ENCODE measurements at regions of chr15 and their contacts with region 1.

Region 1: DNA sequence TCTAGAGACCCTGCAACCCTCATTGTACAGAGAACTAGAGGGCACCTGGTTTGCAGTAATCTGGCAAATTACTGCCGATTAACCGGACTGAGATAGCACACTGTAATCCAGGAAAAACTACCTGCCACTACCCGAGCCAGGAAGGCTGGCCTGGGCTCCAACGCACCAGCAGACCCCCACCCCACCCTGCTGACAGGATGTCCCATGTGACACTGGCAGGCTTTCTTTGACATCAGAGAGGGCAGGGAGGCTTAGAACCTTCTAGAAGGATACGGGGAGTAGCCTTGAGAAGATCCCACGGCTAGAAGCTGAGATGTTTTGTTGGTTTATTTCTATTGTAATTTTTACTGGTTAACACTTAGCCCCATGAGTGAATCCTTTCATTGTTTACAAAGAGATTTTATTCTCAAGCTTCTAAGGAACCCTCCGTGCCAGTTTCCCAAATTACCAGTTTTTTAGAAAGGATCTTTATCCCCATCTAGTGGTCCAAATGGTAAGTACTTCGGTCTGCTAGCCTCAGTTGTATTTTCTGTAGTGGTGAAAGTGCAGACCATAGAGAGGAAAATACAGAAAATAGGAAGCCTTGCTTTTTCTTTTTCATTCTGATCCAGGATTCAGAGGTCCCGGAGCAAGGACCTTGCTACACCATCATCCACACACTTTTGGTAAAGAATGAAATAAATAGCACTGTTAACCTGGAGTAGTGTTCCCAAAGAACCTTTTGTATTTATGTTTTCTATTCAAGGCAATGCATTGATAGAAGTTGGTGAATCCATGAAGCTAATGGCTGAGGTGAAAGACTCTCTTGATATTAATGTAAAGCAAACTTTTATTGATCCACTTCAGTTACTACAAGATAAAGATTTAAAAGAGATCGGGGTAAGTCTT is 81.9 kb upstream of the ADAMTSL3 start:
- DNase-seq: no peak
- ATAC-seq: 0 out of 3 replicates have a peak, but pooled peaks have one; percentile 29
- H3K4me3 ChIP-seq: no peak overlapping the region
- H3K27ac ChIP-seq: no peak overlapping the region
- H3K4me1 ChIP-seq: no peaks in the 10 kb centered on the region; the same call in 1 of the 2 replicates
- H3K27me3 ChIP-seq: no peaks in the 10 kb centered on the region; a peak in 1 of 4 replicates
- CTCF ChIP-seq: peak; percentile 40 to 62 (median 50); a peak in 4 of 6 replicates
- EP300 ChIP-seq: no peak
- POLR2A ChIP-seq: no peak
- RAD21 ChIP-seq: peak; percentile 48

Region 2: DNA sequence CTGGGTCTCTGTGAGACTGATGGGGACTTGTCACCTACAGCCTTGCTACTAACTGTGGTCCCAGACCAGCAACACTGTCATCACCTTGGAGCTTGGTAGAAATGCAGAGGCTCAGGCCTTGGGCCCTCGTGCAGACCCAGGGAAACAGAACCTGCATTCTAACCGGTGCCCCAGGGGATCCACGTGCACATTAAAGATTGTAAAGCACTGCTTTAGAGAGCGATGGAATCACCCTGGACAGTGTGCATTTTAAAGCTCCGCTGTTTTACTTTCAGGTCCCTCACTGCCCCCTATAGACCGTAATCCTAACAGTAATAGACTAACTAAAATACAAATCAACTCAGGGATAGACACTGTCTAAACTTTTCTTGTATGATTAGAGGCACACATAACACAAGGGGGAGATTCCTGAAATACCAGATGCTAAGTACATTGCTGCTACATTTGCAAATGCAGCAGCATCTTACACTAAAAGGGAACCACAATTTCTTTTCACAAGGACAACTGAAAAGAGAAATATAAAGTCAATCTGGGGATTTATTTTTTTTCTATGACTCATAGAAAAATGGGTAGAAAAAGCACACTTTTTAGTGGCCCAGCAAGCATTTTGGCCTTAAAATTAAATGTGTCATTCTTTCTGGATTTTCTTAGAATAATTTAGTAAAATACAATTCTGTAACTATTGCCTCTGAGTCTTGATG is 135.5 kb before region 1 on chr15:
- CTCF ChIA-PET with region 1: interaction called, 8 read pairs
- POLR2A ChIA-PET with region 1: no interaction called
- RAD21 ChIA-PET with region 1: interaction called, 4 read pairs
- SMC1A ChIA-PET with region 1: no interaction called
- in situ Hi-C with region 1: no loop called
- intact Hi-C with region 1: loop called (anchors 1 kb)
- DNase-seq: no peak
- ATAC-seq: peak; percentile 70
- H3K4me3 ChIP-seq: no peak overlapping the region
- H3K27ac ChIP-seq: no peak overlapping the region
- H3K4me1 ChIP-seq: no peaks in the 10 kb centered on the region
- H3K27me3 ChIP-seq: peaks cover 0 to 2% of the 10 kb centered on the region in 2 experiments; a peak in 1 of 4 replicates
- CTCF ChIP-seq: peak in 2 of 3 experiments; percentile 16 to 32; a peak in 1 of 6 replicates
- EP300 ChIP-seq: no peak
- POLR2A ChIP-seq: no peak
- RAD21 ChIP-seq: no peak

Region 3: DNA sequence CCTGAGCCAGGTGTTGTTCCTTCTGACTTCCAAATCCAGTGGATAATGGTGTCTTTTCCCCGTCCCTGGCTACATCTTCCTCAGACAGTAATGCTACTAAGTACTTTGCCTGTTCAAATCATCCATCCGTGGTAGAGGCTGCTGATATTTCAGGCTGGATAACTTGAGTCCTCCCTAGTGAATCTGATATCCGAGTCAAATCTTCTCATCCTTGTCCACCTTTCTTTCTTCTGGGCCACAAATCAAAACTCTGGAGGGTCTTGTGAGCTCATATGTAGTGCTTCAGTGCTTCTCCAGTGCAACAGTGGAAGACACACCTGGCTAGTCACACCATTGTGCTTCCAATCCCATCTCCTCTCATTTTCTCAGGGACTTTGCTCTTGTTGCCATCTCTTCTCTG is 113.7 kb before region 1 on chr15:
- CTCF ChIA-PET with region 1: no interaction called
- POLR2A ChIA-PET with region 1: no interaction called
- RAD21 ChIA-PET with region 1: no interaction called
- SMC1A ChIA-PET with region 1: no interaction called
- in situ Hi-C with region 1: no loop called
- intact Hi-C with region 1: no loop called
- DNase-seq: no peak
- ATAC-seq: no peak
- H3K4me3 ChIP-seq: no peak overlapping the region
- H3K27ac ChIP-seq: no peak overlapping the region
- H3K4me1 ChIP-seq: no peaks in the 10 kb centered on the region
- H3K27me3 ChIP-seq: no peaks in the 10 kb centered on the region; a peak in 1 of 4 replicates
- CTCF ChIP-seq: no peak
- EP300 ChIP-seq: no peak
- POLR2A ChIP-seq: no peak
- RAD21 ChIP-seq: no peak

Region 4: DNA sequence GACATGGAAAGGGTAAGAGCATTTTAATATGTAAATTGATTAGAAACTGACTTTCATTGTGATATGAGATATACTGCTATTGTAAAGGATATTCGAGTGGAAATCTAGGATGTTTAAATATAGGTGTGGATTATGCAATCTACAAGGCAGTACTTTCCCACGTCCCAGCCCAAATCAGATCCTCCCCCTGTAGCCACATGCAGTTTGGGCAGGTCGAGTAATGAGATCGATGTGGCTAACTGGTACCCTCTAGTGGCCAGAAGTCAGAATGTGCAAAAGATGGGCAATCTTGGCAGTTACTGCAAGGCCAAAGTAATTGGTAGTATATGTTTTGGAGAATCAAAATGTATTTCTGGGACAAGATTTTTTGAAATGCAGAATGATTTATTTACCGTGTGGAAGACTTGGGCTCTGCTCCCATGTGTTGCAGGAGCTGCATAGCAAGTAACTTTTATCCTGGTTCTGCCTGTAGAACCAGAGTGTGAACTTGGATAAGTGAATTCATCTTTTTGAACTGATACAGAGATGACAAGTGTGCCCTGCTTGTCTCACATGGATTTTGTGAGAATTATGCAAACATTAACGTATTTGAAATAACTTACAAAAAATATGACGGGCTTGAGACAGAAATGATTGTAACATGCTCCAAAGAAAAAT is 12.6 kb before region 1 on chr15:
- CTCF ChIA-PET with region 1: interaction called, 27 read pairs
- POLR2A ChIA-PET with region 1: no interaction called
- RAD21 ChIA-PET with region 1: interaction called, 3 read pairs
- SMC1A ChIA-PET with region 1: no interaction called
- in situ Hi-C with region 1: no loop called
- intact Hi-C with region 1: no loop called
- DNase-seq: peak; percentile 20
- ATAC-seq: peak; percentile 88
- H3K4me3 ChIP-seq: no peak overlapping the region
- H3K27ac ChIP-seq: no peak overlapping the region
- H3K4me1 ChIP-seq: no peaks in the 10 kb centered on the region
- H3K27me3 ChIP-seq: no peaks in the 10 kb centered on the region
- CTCF ChIP-seq: peak; percentile 78 to 89 (median 85)
- EP300 ChIP-seq: no peak
- POLR2A ChIP-seq: no peak
- RAD21 ChIP-seq: peak; percentile 80

Measured in GM12878 (cell line).